Activated B cell treated with CpG ODN at 0.5 μM for 24 hours (primary cell): ENCODE measurements at regions of chrX and their contacts with region 1.

Region 1: GRCh38 chrX:11533211-11533651 is 132.5 kb downstream of the ARHGAP6 start:
- DNase-seq: no peak
- ATAC-seq: peak; percentile 99
- H3K4me3 Mint-ChIP-seq: no peak overlapping the region
- H3K27ac Mint-ChIP-seq: no peak overlapping the region
- H3K4me1 Mint-ChIP-seq: peaks cover 3% of the 10 kb centered on the region
- H3K27me3 Mint-ChIP-seq: no peaks in the 10 kb centered on the region
- CTCF ChIP-seq: peak; percentile 44

Region 2: GRCh38 chrX:10401239-10401638 is 1132.0 kb before region 1 on chrX:
- CTCF ChIA-PET with region 1: no interaction called
- POLR2A ChIA-PET with region 1: no interaction called
- intact Hi-C with region 1: no loop called
- DNase-seq: no peak
- ATAC-seq: no peak
- H3K4me3 Mint-ChIP-seq: no peak overlapping the region
- H3K27ac Mint-ChIP-seq: no peak overlapping the region
- H3K4me1 Mint-ChIP-seq: peaks cover 11% of the 10 kb centered on the region
- H3K27me3 Mint-ChIP-seq: peaks cover 2% of the 10 kb centered on the region
- CTCF ChIP-seq: no peak

Region 3: GRCh38 chrX:11724122-11725017 is 191.1 kb after region 1 on chrX:
- CTCF ChIA-PET with region 1: no interaction called
- POLR2A ChIA-PET with region 1: no interaction called
- intact Hi-C with region 1: loop called (anchors 1 kb)
- DNase-seq: no peak
- ATAC-seq: no peak
- H3K4me3 Mint-ChIP-seq: no peak overlapping the region
- H3K27ac Mint-ChIP-seq: no peak overlapping the region
- H3K4me1 Mint-ChIP-seq: no peaks in the 10 kb centered on the region
- H3K27me3 Mint-ChIP-seq: no peaks in the 10 kb centered on the region
- CTCF ChIP-seq: peak; percentile 21

Region 4: GRCh38 chrX:11908371-11908770 is 375.1 kb after region 1 on chrX:
- CTCF ChIA-PET with region 1: no interaction called
- POLR2A ChIA-PET with region 1: no interaction called
- intact Hi-C with region 1: loop called (anchors 1 kb)
- DNase-seq: no peak
- ATAC-seq: peak; percentile 56
- H3K4me3 Mint-ChIP-seq: no peak overlapping the region
- H3K27ac Mint-ChIP-seq: no peak overlapping the region
- H3K4me1 Mint-ChIP-seq: no peaks in the 10 kb centered on the region
- H3K27me3 Mint-ChIP-seq: no peaks in the 10 kb centered on the region
- CTCF ChIP-seq: no peak